ENCODE measurements at regions of chr1 and their contacts with region 1.

Region 1: DNA sequence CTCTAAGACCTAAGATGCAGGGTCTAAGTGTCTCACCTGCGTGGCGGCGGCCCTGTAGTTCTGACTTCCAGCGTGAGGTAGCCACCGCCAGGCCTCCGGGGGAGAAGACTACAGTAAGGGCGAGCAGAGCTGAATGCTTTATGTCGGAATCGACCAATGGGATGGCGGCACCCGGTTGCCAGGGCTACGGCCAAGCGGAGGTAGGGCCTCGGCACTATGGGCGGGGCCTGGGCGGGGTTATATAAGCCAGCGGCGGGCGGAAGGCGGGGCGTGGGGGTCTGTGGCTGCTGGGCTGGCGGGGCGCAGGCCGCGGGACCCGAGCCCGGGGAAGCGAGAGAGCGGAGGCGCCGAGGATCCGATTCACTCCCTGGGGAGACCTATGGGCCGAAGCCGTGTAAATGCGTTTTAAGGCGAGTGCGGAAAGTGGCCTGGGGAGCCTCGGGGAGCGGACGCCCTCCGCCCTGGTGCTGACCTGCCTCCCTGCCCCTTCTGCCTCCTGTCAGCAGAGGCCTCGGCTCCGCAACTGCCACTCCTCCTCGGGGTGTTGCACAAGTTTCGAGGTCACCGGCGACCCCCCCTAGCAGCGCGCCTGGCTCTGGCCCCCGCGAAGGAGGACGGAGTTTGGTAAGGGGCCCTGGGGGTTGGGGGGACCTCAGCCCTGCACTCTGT is at the start of gene AZIN2:
- DNase-seq: peak; percentile 94 to 99 (median 95)
- ATAC-seq: peak; percentile 99
- H3K4me3 ChIP-seq: peak within 1 kb of the TSS; percentile 68
- H3K4me3 Mint-ChIP-seq: peak within 1 kb of the TSS; percentile 81 to 88 (median 86)
- H3K27ac ChIP-seq: peak within 1 kb of the TSS; percentile 66
- H3K27ac Mint-ChIP-seq: peak within 1 kb of the TSS; percentile 6 to 91 (median 72)
- H3K4me1 ChIP-seq: peaks cover 14 to 15% of the 10 kb centered on the region in 2 donors
- H3K4me1 Mint-ChIP-seq: peaks cover 20 to 40% (median 35%) of the 10 kb centered on the region in 7 donors
- H3K27me3 ChIP-seq: no peaks in the 10 kb centered on the region
- H3K27me3 Mint-ChIP-seq: peaks cover 0 to 30% (median 0%) of the 10 kb centered on the region in 5 donors
- total RNA-seq, gene AZIN2: 5.3 to 9.6 (median 9.0) TPM

Region 2: DNA sequence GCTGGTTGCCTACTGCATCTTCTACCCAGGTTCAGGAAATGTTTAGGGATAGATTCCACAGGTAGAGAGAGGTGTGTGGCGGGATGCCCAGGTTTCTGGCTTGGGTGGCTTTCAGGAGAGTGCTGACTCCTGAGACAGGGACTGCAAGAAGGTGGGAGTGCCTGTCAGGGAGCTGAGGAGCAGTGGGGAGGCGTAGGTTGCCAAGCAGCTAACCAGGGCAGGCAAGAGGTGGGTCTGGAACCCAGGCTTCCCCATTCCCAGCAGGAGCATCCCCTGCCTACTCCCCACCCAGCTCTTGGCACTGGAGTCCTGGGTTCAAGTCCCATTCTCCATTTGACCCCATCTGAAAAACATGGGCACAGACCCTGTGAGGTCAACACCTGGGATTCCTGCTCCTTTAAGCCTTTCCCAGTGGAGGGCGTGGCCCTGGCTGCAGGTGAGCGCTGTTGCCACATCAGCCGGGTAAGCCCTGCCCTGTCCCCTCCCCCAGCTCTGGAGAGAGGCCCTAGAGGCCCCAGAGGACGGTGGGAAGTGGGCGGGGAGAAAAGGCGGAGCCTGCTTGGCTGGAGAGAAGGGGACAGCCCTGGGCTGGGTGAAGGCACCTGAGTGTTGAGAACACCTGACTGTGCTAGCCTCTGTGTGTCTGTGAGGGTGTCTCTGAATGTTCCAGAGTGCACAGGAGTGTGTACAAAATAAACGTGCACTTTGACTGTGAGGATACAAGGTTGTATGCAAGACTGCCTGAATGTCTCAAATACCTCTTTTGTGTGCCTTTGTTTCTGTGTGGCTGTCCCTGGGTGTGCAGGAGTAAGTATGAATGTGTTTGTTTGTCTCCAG is 364.5 kb before region 1 on chr1:
- CTCF ChIA-PET with region 1: no interaction called
- POLR2A ChIA-PET with region 1: no interaction called
- intact Hi-C with region 1: loop called in 1 of 2 experiments (anchors 10 kb)
- DNase-seq: peak in 6 of 9 donors; percentile 18 to 67 (median 28)
- ATAC-seq: peak; percentile 25
- H3K4me3 ChIP-seq: no peak overlapping the region
- H3K4me3 Mint-ChIP-seq: peak overlapping the region in 1 of 10 donors; percentile 30
- H3K27ac ChIP-seq: no peak overlapping the region
- H3K27ac Mint-ChIP-seq: peak overlapping the region in 3 of 9 donors; percentile 13 to 47 (median 41)
- H3K4me1 ChIP-seq: peaks cover 0 to 5% of the 10 kb centered on the region in 2 donors
- H3K4me1 Mint-ChIP-seq: peaks cover 0 to 15% (median 14%) of the 10 kb centered on the region in 7 donors
- H3K27me3 ChIP-seq: no peaks in the 10 kb centered on the region
- H3K27me3 Mint-ChIP-seq: peaks cover 0 to 6% (median 0%) of the 10 kb centered on the region in 5 donors

Region 3: GRCh38 chr1:33036526-33037503 is 44.2 kb before region 1 on chr1 and contains the start of gene AK2:
- CTCF ChIA-PET with region 1: no interaction called
- POLR2A ChIA-PET with region 1: no interaction called
- intact Hi-C with region 1: loop called (anchors 1 kb)
- DNase-seq: peak; percentile 63 to 91 (median 84)
- ATAC-seq: peak; percentile 100
- H3K4me3 ChIP-seq: peak within 1 kb of the TSS; percentile 70
- H3K4me3 Mint-ChIP-seq: peak within 1 kb of the TSS; percentile 92 to 99 (median 96)
- H3K27ac ChIP-seq: peak within 1 kb of the TSS; percentile 73
- H3K27ac Mint-ChIP-seq: peak within 1 kb of the TSS; percentile 74 to 96 (median 89)
- H3K4me1 ChIP-seq: peaks cover 11 to 24% of the 10 kb centered on the region in 2 donors
- H3K4me1 Mint-ChIP-seq: peaks cover 35 to 50% (median 46%) of the 10 kb centered on the region in 7 donors
- H3K27me3 ChIP-seq: no peaks in the 10 kb centered on the region
- H3K27me3 Mint-ChIP-seq: peaks cover 0 to 1% (median 0%) of the 10 kb centered on the region in 5 donors
- total RNA-seq, gene AK2: 53.8 to 219 (median 90.2) TPM

Region 4: GRCh38 chr1:33055210-33056008 is 25.6 kb before region 1 on chr1:
- CTCF ChIA-PET with region 1: no interaction called
- POLR2A ChIA-PET with region 1: no interaction called
- intact Hi-C with region 1: no loop called
- DNase-seq: peak; percentile 2 to 30 (median 22)
- ATAC-seq: peak; percentile 86
- H3K4me3 ChIP-seq: no peak overlapping the region
- H3K4me3 Mint-ChIP-seq: no peak overlapping the region
- H3K27ac ChIP-seq: no peak overlapping the region
- H3K27ac Mint-ChIP-seq: peak overlapping the region in 1 of 9 donors; percentile 62
- H3K4me1 ChIP-seq: no peaks in the 10 kb centered on the region
- H3K4me1 Mint-ChIP-seq: peaks cover 0 to 11% (median 6%) of the 10 kb centered on the region in 7 donors
- H3K27me3 ChIP-seq: no peaks in the 10 kb centered on the region
- H3K27me3 Mint-ChIP-seq: peaks cover 0 to 11% (median 4%) of the 10 kb centered on the region in 5 donors

Region 5: GRCh38 chr1:33181921-33182341 is 100.9 kb after region 1 on chr1 and contains the start of gene TRIM62:
- CTCF ChIA-PET with region 1: no interaction called
- POLR2A ChIA-PET with region 1: no interaction called
- intact Hi-C with region 1: loop called in 1 of 2 experiments (anchors 2 kb)
- DNase-seq: peak; percentile 57 to 80 (median 73)
- ATAC-seq: peak; percentile 85
- H3K4me3 ChIP-seq: peak within 1 kb of the TSS; percentile 78
- H3K4me3 Mint-ChIP-seq: peak within 1 kb of the TSS; percentile 84 to 95 (median 89)
- H3K27ac ChIP-seq: peak within 1 kb of the TSS; percentile 64
- H3K27ac Mint-ChIP-seq: peak within 1 kb of the TSS; percentile 47 to 89 (median 79)
- H3K4me1 ChIP-seq: peaks cover 8 to 12% of the 10 kb centered on the region in 2 donors
- H3K4me1 Mint-ChIP-seq: peaks cover 22 to 35% (median 31%) of the 10 kb centered on the region in 7 donors
- H3K27me3 ChIP-seq: no peaks in the 10 kb centered on the region
- H3K27me3 Mint-ChIP-seq: peaks cover 0 to 35% (median 7%) of the 10 kb centered on the region in 5 donors
- total RNA-seq, gene TRIM62: 13.2 to 24.2 (median 19.4) TPM

Region 6: GRCh38 chr1:33349778-33350610 is 269.0 kb after region 1 on chr1:
- CTCF ChIA-PET with region 1: no interaction called
- POLR2A ChIA-PET with region 1: no interaction called
- intact Hi-C with region 1: loop called (anchors 1 kb)
- DNase-seq: peak; percentile 64 to 85 (median 73)
- ATAC-seq: peak; percentile 93
- H3K4me3 ChIP-seq: peak overlapping the region; percentile 96
- H3K4me3 Mint-ChIP-seq: peak overlapping the region; percentile 89 to 95 (median 92)
- H3K27ac ChIP-seq: peak overlapping the region; percentile 69
- H3K27ac Mint-ChIP-seq: peak overlapping the region; percentile 54 to 91 (median 88)
- H3K4me1 ChIP-seq: peaks cover 23 to 25% of the 10 kb centered on the region in 2 donors
- H3K4me1 Mint-ChIP-seq: peaks cover 32 to 51% (median 46%) of the 10 kb centered on the region in 7 donors
- H3K27me3 ChIP-seq: no peaks in the 10 kb centered on the region
- H3K27me3 Mint-ChIP-seq: peaks cover 0 to 7% (median 0%) of the 10 kb centered on the region in 5 donors

Measured in naive thymus-derived CD4-positive, alpha-beta T cell (primary cell).